Right cardiac atrium (tissue), 5 donors: ENCODE measurements at regions of chr5 and their contacts with region 1.

Region 1: GRCh38 chr5:91110686-91111085 is 272.4 kb downstream of the ARRDC3 start:
- DNase-seq: no peak
- ATAC-seq: peak; percentile 78 to 81
- H3K4me3 ChIP-seq: no peak overlapping the region
- H3K27ac ChIP-seq: peak overlapping the region; percentile 12
- H3K4me1 ChIP-seq: no peaks in the 10 kb centered on the region
- H3K27me3 ChIP-seq: no peaks in the 10 kb centered on the region

Region 2: GRCh38 chr5:90830058-90830457 is 280.6 kb before region 1 on chr5:
- intact Hi-C with region 1: no loop called
- DNase-seq: no peak
- ATAC-seq: no peak
- H3K4me3 ChIP-seq: no peak overlapping the region
- H3K27ac ChIP-seq: no peak overlapping the region
- H3K4me1 ChIP-seq: no peaks in the 10 kb centered on the region
- H3K27me3 ChIP-seq: no peaks in the 10 kb centered on the region

Region 3: GRCh38 chr5:91151947-91152346 is 41.3 kb after region 1 on chr5:
- intact Hi-C with region 1: no loop called
- DNase-seq: peak; percentile 57 to 81 (median 66)
- ATAC-seq: peak; percentile 93 to 94
- H3K4me3 ChIP-seq: no peak overlapping the region
- H3K27ac ChIP-seq: no peak overlapping the region
- H3K4me1 ChIP-seq: no peaks in the 10 kb centered on the region
- H3K27me3 ChIP-seq: no peaks in the 10 kb centered on the region

Region 4: GRCh38 chr5:91219803-91220371 is 109.2 kb after region 1 on chr5:
- intact Hi-C with region 1: loop called in 1 of 4 experiments (anchors 10 kb)
- DNase-seq: peak in 1 of 3 donors; percentile 62
- ATAC-seq: peak in 1 of 2 donors; percentile 50
- H3K4me3 ChIP-seq: no peak overlapping the region
- H3K27ac ChIP-seq: no peak overlapping the region
- H3K4me1 ChIP-seq: no peaks in the 10 kb centered on the region
- H3K27me3 ChIP-seq: no peaks in the 10 kb centered on the region

Region 5: GRCh38 chr5:91280362-91281269 is 169.9 kb after region 1 on chr5:
- intact Hi-C with region 1: loop called in 2 of 4 experiments (anchors 10 kb)
- DNase-seq: peak; percentile 96 to 97 (median 97)
- ATAC-seq: peak; percentile 98
- H3K4me3 ChIP-seq: peak overlapping the region; percentile 50
- H3K27ac ChIP-seq: peak overlapping the region; percentile 99
- H3K4me1 ChIP-seq: no peaks in the 10 kb centered on the region
- H3K27me3 ChIP-seq: no peaks in the 10 kb centered on the region

Region 6: DNA sequence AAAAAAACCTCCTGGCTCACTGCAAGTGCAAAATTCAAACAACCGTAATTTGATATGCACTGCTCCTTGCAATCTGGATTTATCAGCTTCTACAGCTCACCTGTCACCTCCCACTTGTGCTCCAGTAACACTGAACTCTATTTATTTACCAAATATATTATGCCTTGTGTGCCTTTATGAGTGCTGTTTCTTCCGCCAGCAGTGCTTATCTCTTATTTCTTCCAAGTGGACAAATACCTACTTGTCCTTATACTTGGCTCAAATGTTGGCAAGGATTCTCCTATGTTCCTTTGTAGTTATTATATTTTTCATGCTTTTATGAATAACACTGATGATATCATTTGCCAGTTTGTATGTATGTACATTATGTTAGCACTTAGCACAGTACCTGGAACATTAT is 418.1 kb after region 1 on chr5:
- intact Hi-C with region 1: no loop called
- DNase-seq: no peak
- ATAC-seq: no peak
- H3K4me3 ChIP-seq: no peak overlapping the region
- H3K27ac ChIP-seq: no peak overlapping the region
- H3K4me1 ChIP-seq: no peaks in the 10 kb centered on the region
- H3K27me3 ChIP-seq: no peaks in the 10 kb centered on the region